Left ventricle myocardium superior (tissue), 1 donor: ENCODE measurements at regions of chr12 and their contacts with region 1.

Region 1: DNA sequence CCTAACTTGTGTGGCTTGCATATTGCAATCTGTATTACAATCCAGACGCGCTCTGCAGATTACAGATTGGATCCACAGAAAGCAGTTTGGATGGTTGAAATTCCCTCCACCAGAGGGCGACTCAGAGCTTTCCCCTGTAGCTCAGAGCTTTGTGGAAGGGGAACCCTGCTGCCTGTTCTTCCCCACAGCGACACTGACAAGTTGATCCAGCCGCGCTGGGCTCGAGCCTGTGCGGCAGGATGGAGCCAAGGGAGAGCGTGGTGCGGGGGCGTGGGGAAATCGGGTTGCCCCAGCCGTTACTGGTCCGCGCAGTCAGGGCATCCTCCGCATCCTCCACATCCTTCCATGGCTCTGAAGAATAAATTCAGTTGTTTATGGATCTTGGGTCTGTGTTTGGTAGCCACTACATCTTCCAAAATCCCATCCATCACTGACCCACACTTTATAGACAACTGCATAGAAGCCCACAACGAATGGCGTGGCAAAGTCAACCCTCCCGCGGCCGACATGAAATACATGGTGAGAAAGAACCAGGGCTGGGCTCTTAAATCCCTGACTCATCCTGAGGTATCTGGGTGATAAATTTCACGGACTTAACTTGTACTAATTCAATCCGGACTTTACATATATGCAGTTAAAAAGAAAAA is at the start of gene GLIPR1L1:
- DNase-seq: peak; percentile 79
- ATAC-seq: peak; percentile 85
- total RNA-seq, gene GLIPR1L1: not detected

Region 2: GRCh38 chr12:75390899-75391538 is 56.5 kb after region 1 on chr12 and contains the start of gene GLIPR1L2:
- intact Hi-C with region 1: loop called (anchors 10 kb)
- DNase-seq: peak; percentile 97
- ATAC-seq: peak; percentile 100
- total RNA-seq, gene GLIPR1L2: 1.3 TPM

Region 3: GRCh38 chr12:75505706-75506312 is 171.3 kb after region 1 on chr12:
- intact Hi-C with region 1: loop called (anchors 10 kb)
- DNase-seq: no peak
- ATAC-seq: no peak